ENCODE measurements at regions of chr4 and their contacts with region 1.

Region 1: DNA sequence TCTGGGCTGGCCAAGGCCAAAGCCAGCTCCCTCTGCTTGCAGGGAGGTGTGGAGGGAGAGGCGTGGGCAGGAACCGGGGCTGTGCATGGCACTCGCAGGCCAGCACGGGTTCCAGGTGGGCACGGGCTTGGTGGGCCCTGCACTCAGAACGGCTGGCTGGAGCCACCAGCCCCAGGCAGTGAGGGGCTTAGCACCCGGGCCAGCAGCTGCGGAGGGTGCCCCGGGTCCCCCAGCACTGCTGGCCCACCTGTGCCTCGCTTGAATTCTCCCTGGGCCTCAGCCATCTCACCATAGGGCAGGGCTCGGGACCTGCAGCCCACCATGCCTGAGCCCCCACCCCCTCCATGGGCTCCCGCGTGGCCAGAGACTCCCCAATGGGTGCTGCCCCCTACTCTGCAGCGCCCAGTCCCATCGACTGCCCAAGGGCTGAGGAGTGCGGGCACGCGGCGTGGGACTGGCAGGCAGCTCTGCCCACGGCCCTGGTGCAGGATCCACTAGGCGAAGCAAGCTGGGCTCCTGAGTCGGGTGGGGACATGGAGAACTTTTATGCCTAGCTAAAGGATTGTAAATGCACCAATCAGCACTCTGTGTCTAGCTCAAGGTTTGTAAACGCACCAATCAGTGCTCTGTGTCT is 193.9 kb downstream of the LARP7 start:
- DNase-seq: no peak
- H3K4me3 ChIP-seq: no peak overlapping the region
- H3K4me3 Mint-ChIP-seq: no peak overlapping the region
- H3K27ac Mint-ChIP-seq: no peak overlapping the region
- H3K4me1 ChIP-seq: no peaks in the 10 kb centered on the region
- H3K4me1 Mint-ChIP-seq: no peaks in the 10 kb centered on the region
- H3K27me3 ChIP-seq: no peaks in the 10 kb centered on the region
- H3K27me3 Mint-ChIP-seq: no peaks in the 10 kb centered on the region
- CTCF ChIP-seq: no peak

Region 2: GRCh38 chr4:112315446-112315845 is 515.4 kb before region 1 on chr4:
- CTCF ChIA-PET with region 1: interaction called, 12 read pairs
- POLR2A ChIA-PET with region 1: no interaction called
- intact Hi-C with region 1: no loop called
- DNase-seq: no peak
- H3K4me3 ChIP-seq: no peak overlapping the region
- H3K4me3 Mint-ChIP-seq: no peak overlapping the region
- H3K27ac Mint-ChIP-seq: no peak overlapping the region
- H3K4me1 ChIP-seq: no peaks in the 10 kb centered on the region
- H3K4me1 Mint-ChIP-seq: no peaks in the 10 kb centered on the region
- H3K27me3 ChIP-seq: no peaks in the 10 kb centered on the region
- H3K27me3 Mint-ChIP-seq: no peaks in the 10 kb centered on the region
- CTCF ChIP-seq: no peak

Region 3: DNA sequence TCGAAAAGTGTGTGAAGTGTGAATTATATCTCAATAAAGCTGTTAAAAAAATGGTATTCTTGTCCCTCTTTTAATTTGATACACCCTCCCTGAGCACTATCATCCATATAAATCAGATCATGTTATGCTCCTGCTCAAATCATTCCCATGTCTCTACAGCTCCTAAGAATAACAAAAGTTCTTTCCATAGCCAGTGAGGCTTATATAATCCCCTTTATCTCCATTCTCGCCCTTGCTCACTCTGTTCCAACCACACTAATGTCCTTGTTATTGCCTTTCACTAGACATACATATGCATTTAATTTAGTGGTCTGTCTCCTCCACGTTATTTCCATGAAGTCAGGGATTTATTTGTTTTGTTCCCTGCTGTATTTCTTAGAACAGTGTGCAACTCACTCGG is 204.6 kb before region 1 on chr4:
- CTCF ChIA-PET with region 1: no interaction called
- POLR2A ChIA-PET with region 1: no interaction called
- intact Hi-C with region 1: no loop called
- DNase-seq: no peak
- H3K4me3 ChIP-seq: no peak overlapping the region
- H3K4me3 Mint-ChIP-seq: no peak overlapping the region
- H3K27ac Mint-ChIP-seq: no peak overlapping the region
- H3K4me1 ChIP-seq: no peaks in the 10 kb centered on the region
- H3K4me1 Mint-ChIP-seq: no peaks in the 10 kb centered on the region
- H3K27me3 ChIP-seq: no peaks in the 10 kb centered on the region
- H3K27me3 Mint-ChIP-seq: no peaks in the 10 kb centered on the region
- CTCF ChIP-seq: no peak

Region 4: GRCh38 chr4:113069212-113069892 is 238.5 kb after region 1 on chr4:
- CTCF ChIA-PET with region 1: no interaction called
- POLR2A ChIA-PET with region 1: no interaction called
- intact Hi-C with region 1: no loop called
- DNase-seq: peak in 1 of 2 experiments; percentile 2
- H3K4me3 ChIP-seq: no peak overlapping the region
- H3K4me3 Mint-ChIP-seq: no peak overlapping the region
- H3K27ac Mint-ChIP-seq: no peak overlapping the region
- H3K4me1 ChIP-seq: 0 out of 2 replicates have a peak, but pooled peaks cover 1% of the 10 kb centered on the region
- H3K4me1 Mint-ChIP-seq: no peaks in the 10 kb centered on the region
- H3K27me3 ChIP-seq: no peaks in the 10 kb centered on the region
- H3K27me3 Mint-ChIP-seq: no peaks in the 10 kb centered on the region
- CTCF ChIP-seq: no peak

Measured in Caco-2 (cell line).